A673 (cell line): ENCODE measurements at regions of chr2 and their contacts with region 1.

Region 1: GRCh38 chr2:173210270-173211196 is 134.9 kb downstream of the MAP3K20 start:
- DNase-seq: peak; percentile 86
- H3K4me3 ChIP-seq: no peak overlapping the region
- H3K27ac ChIP-seq: no peak overlapping the region
- H3K4me1 ChIP-seq: peaks cover 4% of the 10 kb centered on the region
- H3K27me3 ChIP-seq: no peaks in the 10 kb centered on the region
- CTCF ChIP-seq: peak; percentile 92

Region 2: GRCh38 chr2:172985139-172985901 is 225.2 kb before region 1 on chr2:
- CTCF ChIA-PET with region 1: no interaction called
- POLR2A ChIA-PET with region 1: no interaction called
- intact Hi-C with region 1: no loop called
- DNase-seq: no peak
- H3K4me3 ChIP-seq: no peak overlapping the region
- H3K27ac ChIP-seq: no peak overlapping the region
- H3K4me1 ChIP-seq: no peaks in the 10 kb centered on the region
- H3K27me3 ChIP-seq: peaks cover 5% of the 10 kb centered on the region
- CTCF ChIP-seq: no peak

Region 3: GRCh38 chr2:173264603-173265366 is 54.3 kb after region 1 on chr2:
- CTCF ChIA-PET with region 1: no interaction called
- POLR2A ChIA-PET with region 1: interaction called, 10 read pairs
- intact Hi-C with region 1: no loop called
- DNase-seq: peak; percentile 15
- H3K4me3 ChIP-seq: no peak overlapping the region
- H3K27ac ChIP-seq: no peak overlapping the region
- H3K4me1 ChIP-seq: peaks cover 3% of the 10 kb centered on the region
- H3K27me3 ChIP-seq: no peaks in the 10 kb centered on the region
- CTCF ChIP-seq: no peak

Region 4: DNA sequence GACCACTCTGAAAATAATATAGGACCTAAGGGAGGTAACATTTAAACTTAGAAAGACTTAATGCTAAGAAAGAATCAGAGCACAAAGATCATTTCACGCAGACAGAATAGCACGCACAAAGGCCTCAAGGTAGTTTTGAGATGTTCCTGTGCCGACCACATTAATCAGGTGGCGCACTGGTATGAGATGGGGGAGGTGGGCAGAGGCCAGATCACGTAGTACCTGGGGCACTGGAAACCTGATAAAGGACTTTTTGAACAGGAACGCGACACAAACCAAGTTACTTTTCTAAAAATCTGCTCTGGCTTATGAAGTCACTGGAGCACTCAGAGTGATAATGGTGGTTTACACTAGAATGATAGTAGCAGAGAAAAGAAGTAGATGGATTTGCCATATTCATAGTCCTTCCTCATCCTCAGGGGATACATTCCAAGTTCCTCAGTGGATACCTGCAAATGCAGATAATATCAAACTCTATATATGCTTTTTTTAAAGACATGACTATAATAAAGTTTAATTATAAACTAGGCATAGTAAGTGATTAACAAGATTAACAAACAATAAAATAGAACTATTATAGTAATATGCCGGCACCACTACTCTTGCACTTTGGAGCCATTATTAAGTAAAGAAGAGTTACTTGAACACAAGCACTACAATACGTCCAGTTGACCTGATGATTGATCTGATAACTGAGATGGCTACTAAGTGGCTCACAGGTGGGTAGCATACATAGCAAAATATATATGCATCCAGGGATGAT is 101.5 kb after region 1 on chr2:
- CTCF ChIA-PET with region 1: no interaction called
- POLR2A ChIA-PET with region 1: no interaction called
- intact Hi-C with region 1: no loop called
- DNase-seq: no peak
- H3K4me3 ChIP-seq: no peak overlapping the region
- H3K27ac ChIP-seq: no peak overlapping the region
- H3K4me1 ChIP-seq: no peaks in the 10 kb centered on the region
- H3K27me3 ChIP-seq: no peaks in the 10 kb centered on the region
- CTCF ChIP-seq: no peak

Region 5: DNA sequence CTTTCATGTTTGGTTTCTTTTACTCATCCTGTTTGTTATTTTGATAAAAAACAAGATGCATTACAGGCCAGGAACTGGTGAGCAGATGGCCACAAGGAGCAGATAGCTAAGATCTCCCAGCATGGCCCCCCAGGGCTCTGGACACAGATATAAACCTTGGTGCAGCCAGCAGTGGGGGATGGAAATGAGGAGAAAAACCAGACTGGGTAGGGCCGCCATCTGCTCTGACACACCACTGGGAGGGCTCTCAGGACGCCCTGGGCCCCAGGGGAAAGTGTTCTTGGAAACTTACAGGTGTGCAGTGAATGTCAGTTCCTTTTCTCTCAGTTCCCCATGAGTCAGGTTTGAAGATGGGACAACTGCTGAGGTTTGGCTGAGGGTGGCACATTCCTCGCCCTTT is 1325.8 kb after region 1 on chr2:
- CTCF ChIA-PET with region 1: no interaction called
- POLR2A ChIA-PET with region 1: no interaction called
- intact Hi-C with region 1: no loop called
- DNase-seq: no peak
- H3K4me3 ChIP-seq: no peak overlapping the region
- H3K27ac ChIP-seq: no peak overlapping the region
- H3K4me1 ChIP-seq: no peaks in the 10 kb centered on the region
- H3K27me3 ChIP-seq: peaks cover 7% of the 10 kb centered on the region
- CTCF ChIP-seq: no peak